ENCODE measurements at regions of chr5 and their contacts with region 1.

Region 1: DNA sequence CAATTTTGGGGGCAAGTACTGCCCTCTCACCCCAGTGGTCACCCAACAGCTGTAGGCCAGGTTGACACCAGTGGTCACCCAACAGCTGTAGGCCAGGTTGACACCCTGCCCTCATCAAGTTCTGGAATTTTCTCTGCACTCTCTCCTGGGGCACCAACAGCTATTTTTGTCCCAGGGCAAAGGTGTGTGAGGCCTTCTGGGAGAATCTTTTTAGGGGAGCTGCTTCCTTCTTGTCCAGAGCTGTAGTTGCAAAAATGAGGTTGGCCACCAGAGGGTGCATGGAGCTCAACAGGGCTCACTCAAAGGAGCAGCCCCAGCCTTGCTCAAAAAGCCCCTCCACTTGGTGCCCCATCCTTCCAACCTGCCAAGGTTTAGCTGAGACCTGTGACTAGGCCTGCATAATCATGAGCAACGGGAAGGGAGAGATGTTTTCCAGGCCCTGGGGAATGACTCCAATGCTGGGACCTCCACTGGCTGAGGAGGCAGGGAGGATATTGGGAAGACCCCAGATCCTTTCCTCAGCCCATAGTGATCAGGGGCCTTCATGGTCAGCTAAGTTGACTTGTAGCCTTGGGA is 10.6 kb upstream of the P4HA2 start:
- DNase-seq: peak; percentile 71
- H3K4me3 ChIP-seq: no peak overlapping the region; a peak in 1 of 4 replicates
- H3K27ac ChIP-seq: no peak overlapping the region
- H3K4me1 ChIP-seq: no peaks in the 10 kb centered on the region
- H3K27me3 ChIP-seq: no peaks in the 10 kb centered on the region
- CTCF ChIP-seq: peak; percentile 85
- EP300 ChIP-seq: no peak
- RAD21 ChIP-seq: peak; percentile 82

Region 2: DNA sequence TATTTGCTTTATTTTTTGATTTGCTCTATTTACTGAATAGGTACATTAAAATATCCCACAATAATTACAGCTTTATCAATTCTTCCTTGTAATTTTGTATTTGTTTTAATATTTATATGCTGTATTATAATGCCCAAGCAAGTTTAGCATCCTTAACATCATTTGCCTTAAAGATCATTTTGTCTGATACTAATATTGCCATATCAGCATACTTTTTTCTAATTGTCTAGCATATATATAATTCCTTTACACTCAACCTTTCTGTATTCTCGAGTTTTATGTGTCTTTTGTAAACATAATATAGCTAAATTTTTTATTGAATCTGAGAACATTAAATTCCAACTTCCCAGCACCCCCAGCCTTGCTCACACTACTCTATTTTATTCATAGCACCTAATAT is 75.3 kb before region 1 on chr5:
- CTCF ChIA-PET with region 1: no interaction called
- POLR2A ChIA-PET with region 1: no interaction called
- DNase-seq: no peak
- H3K4me3 ChIP-seq: no peak overlapping the region
- H3K27ac ChIP-seq: no peak overlapping the region
- H3K4me1 ChIP-seq: no peaks in the 10 kb centered on the region
- H3K27me3 ChIP-seq: no peaks in the 10 kb centered on the region
- CTCF ChIP-seq: no peak
- EP300 ChIP-seq: no peak
- RAD21 ChIP-seq: no peak

Region 3: GRCh38 chr5:132180134-132180745 is 58.0 kb before region 1 on chr5:
- CTCF ChIA-PET with region 1: interaction called, 11 read pairs
- POLR2A ChIA-PET with region 1: no interaction called
- DNase-seq: peak; percentile 69
- H3K4me3 ChIP-seq: peak overlapping the region in 1 of 2 experiments; percentile 14; a peak in 1 of 4 replicates
- H3K27ac ChIP-seq: no peak overlapping the region
- H3K4me1 ChIP-seq: no peaks in the 10 kb centered on the region
- H3K27me3 ChIP-seq: no peaks in the 10 kb centered on the region
- CTCF ChIP-seq: peak; percentile 76
- EP300 ChIP-seq: no peak
- RAD21 ChIP-seq: peak; percentile 74

Region 4: GRCh38 chr5:132227485-132228240 is 10.6 kb before region 1 on chr5 and contains the start of gene P4HA2:
- CTCF ChIA-PET with region 1: interaction called, 50 read pairs
- POLR2A ChIA-PET with region 1: no interaction called
- DNase-seq: peak; percentile 95
- H3K4me3 ChIP-seq: peak within 1 kb of the TSS; percentile 68 to 83
- H3K27ac ChIP-seq: peak within 1 kb of the TSS; percentile 45 to 67; a peak in 2 of 4 replicates
- H3K4me1 ChIP-seq: peaks cover 28 to 32% of the 10 kb centered on the region in 2 experiments; a peak in 3 of 4 replicates
- H3K27me3 ChIP-seq: no peaks in the 10 kb centered on the region
- CTCF ChIP-seq: no peak; the same call in 1 of the 2 replicates
- EP300 ChIP-seq: no peak
- RAD21 ChIP-seq: no peak
- polyA plus RNA-seq, gene P4HA2: 67.2 and 73.5 TPM in 2 replicates

Region 5: DNA sequence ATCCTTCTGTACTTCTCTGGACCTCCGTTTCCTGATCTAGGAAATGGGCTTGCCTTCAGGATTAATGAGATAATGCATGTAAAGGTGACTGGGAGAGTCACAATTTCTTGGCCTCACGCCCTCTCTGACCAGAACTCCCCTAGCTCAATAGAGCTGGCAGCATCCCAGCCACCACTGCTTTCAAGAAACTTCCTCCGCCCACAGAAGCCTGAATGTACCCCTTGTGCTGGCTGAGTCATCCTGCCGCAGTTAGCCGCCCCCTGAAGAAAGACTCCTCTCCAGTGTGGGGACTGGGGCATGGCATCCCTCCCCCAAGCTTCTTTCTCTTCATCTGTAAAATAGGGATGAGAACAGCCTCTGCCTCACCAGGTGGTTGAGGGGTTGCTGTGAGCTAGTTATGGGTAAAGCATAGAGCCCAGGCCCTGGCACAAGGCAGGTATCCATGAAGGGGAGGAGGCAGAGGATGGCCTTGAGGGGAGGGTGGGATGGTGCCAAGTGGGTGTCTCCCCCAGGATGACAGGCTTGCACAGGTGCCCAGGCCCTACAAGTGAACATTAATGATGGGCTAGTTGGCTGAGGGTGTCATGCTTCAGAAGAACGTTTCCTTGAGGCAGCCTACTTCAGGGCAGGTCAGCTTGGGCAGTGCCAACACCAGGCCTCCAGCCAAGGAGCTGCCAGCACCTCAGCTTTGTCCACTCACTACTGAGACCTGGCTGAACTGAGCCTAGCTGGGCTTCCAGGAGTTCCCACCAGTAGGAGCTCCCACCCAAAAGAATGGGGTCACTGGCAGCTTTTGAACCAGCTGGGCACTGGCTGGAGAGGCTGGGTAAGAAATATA is 22.7 kb after region 1 on chr5:
- CTCF ChIA-PET with region 1: interaction called, 21 read pairs
- POLR2A ChIA-PET with region 1: interaction called, 5 read pairs
- DNase-seq: no peak
- H3K4me3 ChIP-seq: no peak overlapping the region
- H3K27ac ChIP-seq: peak overlapping the region; percentile 91 to 98
- H3K4me1 ChIP-seq: peaks cover 45 to 79% of the 10 kb centered on the region in 2 experiments
- H3K27me3 ChIP-seq: no peaks in the 10 kb centered on the region
- CTCF ChIP-seq: no peak
- EP300 ChIP-seq: peak in 1 of 2 experiments; percentile 66; a peak in 2 of 4 replicates
- RAD21 ChIP-seq: no peak

Region 6: GRCh38 chr5:132293066-132293991 is 55.1 kb after region 1 on chr5:
- CTCF ChIA-PET with region 1: interaction called, 11 read pairs
- POLR2A ChIA-PET with region 1: interaction called, 7 read pairs
- DNase-seq: peak; percentile 92
- H3K4me3 ChIP-seq: peak overlapping the region; percentile 64 to 87
- H3K27ac ChIP-seq: peak overlapping the region; percentile 95 to 99
- H3K4me1 ChIP-seq: peaks cover 9 to 25% of the 10 kb centered on the region in 2 experiments; a peak in 2 of 4 replicates
- H3K27me3 ChIP-seq: no peaks in the 10 kb centered on the region
- CTCF ChIP-seq: peak; percentile 23; the same call in 1 of the 2 replicates
- EP300 ChIP-seq: no peak
- RAD21 ChIP-seq: no peak; the same call in none of the 2 replicates

Region 7: GRCh38 chr5:132466433-132467286 is 228.4 kb after region 1 on chr5:
- CTCF ChIA-PET with region 1: no interaction called
- POLR2A ChIA-PET with region 1: no interaction called
- DNase-seq: no peak
- H3K4me3 ChIP-seq: no peak overlapping the region
- H3K27ac ChIP-seq: peak overlapping the region in 1 of 2 experiments; percentile 34; a peak in 1 of 4 replicates
- H3K4me1 ChIP-seq: peaks cover 9 to 53% of the 10 kb centered on the region in 2 experiments; a peak in 3 of 4 replicates
- H3K27me3 ChIP-seq: no peaks in the 10 kb centered on the region
- CTCF ChIP-seq: no peak
- EP300 ChIP-seq: no peak
- RAD21 ChIP-seq: no peak

Region 8: GRCh38 chr5:132500931-132501630 is 262.8 kb after region 1 on chr5:
- CTCF ChIA-PET with region 1: interaction called, 13 read pairs
- POLR2A ChIA-PET with region 1: no interaction called
- DNase-seq: peak; percentile 82
- H3K4me3 ChIP-seq: peak overlapping the region in 1 of 2 experiments; percentile 20; a peak in 1 of 4 replicates
- H3K27ac ChIP-seq: no peak overlapping the region; a peak in 1 of 4 replicates
- H3K4me1 ChIP-seq: peaks cover 12 to 15% of the 10 kb centered on the region in 2 experiments; a peak in 2 of 4 replicates
- H3K27me3 ChIP-seq: no peaks in the 10 kb centered on the region
- CTCF ChIP-seq: peak; percentile 85
- EP300 ChIP-seq: no peak
- RAD21 ChIP-seq: peak; percentile 90